Right cardiac atrium (tissue), 5 donors: ENCODE measurements at regions of chr21 and their contacts with region 1.

Region 1: GRCh38 chr21:42117229-42117966 is 46.3 kb downstream of the UMODL1 start:
- DNase-seq: peak; percentile 63 to 86 (median 80)
- ATAC-seq: peak; percentile 77 to 85
- H3K4me3 ChIP-seq: no peak overlapping the region
- H3K27ac ChIP-seq: no peak overlapping the region
- H3K4me1 ChIP-seq: no peaks in the 10 kb centered on the region
- H3K27me3 ChIP-seq: no peaks in the 10 kb centered on the region

Region 2: DNA sequence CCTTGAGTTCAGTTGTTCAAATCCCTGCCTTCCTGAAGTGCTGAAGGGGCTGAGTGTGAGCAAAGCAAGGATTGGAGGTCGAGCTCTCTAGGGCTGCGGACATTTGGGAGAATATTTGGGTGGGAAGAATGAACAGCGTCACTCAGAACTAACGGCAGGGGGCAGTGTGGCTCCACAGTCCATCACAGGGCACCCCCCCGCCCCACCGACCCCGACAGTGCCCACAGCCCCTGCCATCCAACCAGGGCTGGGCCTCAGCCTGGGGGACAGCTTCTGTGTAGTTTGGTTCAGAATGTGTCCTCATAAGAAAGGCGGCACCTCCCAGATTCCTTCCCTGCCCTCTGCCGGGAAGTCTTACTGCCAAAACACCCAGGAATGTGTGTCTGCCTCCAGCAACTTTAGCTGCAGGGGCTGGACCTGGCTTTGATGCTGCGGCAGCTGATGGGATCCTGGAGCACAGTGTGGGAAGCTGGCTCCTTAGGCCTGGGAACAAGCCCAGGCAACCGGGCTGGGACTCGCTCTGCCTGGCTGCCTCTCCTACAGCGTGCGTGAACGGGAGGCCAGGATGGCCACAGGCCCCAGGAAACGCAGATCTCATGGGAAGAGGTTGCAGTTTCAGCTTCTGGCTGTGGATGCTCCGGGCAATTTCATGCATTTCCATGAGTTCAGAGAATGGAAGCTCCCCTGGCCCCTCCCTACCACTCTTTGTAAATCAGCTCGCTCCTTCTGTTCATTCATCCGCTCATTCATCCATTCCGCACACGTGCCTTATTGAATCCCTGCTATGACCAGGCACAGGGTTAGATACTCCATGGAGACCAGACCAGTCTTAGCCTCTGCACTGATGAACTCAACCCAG is 504.5 kb before region 1 on chr21:
- intact Hi-C with region 1: loop called in 2 of 4 experiments (anchors 5 to 10 kb)
- DNase-seq: peak; percentile 89 to 93 (median 91)
- ATAC-seq: peak; percentile 90 to 96
- H3K4me3 ChIP-seq: no peak overlapping the region
- H3K27ac ChIP-seq: no peak overlapping the region
- H3K4me1 ChIP-seq: peaks cover 1% of the 10 kb centered on the region
- H3K27me3 ChIP-seq: no peaks in the 10 kb centered on the region

Region 3: DNA sequence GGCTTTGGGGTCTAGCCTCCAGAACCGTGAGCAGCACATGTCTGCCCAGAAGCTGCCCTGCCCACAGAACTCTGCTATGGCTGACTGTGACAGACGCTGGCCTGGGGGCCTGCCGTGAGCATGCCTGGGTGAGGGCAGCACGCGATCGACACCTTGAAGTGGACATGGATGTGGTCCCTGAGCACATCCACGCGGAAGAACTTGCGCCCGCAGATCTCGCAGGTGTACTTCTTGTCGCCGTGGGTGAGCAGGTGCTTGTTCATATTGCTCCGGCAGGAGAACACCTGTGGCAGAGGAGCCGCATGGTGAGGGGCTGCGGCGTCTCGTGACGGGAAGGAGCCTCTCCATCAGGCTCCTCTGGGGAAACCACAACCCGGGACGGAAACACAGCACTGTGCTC is 294.2 kb before region 1 on chr21:
- intact Hi-C with region 1: loop called in 2 of 4 experiments (anchors 5 kb)
- DNase-seq: peak in 1 of 3 donors; percentile 58
- ATAC-seq: no peak
- H3K4me3 ChIP-seq: no peak overlapping the region
- H3K27ac ChIP-seq: no peak overlapping the region
- H3K4me1 ChIP-seq: no peaks in the 10 kb centered on the region
- H3K27me3 ChIP-seq: no peaks in the 10 kb centered on the region

Region 4: DNA sequence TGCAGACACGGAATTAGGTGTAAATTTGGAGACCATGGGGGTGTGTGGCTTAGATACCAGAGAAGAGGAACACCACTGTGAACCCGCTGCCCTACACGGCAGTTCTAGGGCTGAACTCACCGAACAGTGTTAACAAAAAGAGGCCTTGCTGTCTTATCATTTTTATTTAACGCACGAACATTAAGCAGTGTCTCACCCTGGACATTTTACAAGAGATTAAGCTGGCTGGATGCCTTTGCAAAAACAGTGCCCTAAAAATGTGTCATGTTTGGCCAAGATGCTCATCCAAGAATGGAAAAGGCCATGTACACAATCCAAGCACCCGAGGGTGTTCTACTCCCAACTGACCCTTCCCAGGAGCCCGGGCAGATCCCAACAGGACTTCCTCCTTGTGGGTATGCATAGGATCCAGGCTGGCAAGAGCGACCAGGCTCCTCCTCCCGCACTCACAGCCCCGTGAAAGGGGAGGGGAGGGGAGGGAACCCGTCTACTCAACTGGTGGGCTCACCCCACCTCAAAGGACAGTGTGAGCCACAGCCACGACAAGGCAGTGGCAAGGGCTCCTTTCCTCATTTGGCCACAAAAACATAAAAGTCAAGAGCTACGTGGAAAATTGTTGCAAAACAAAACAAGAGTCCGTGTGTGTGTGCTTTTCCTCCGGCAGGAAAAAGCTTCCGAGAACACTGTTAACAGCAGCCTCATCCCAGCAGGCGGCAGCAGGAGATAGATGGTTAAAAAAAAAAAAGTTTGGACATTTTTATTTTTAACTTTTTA is 183.9 kb before region 1 on chr21:
- intact Hi-C with region 1: loop called in 1 of 4 experiments (anchors 5 kb)
- DNase-seq: peak; percentile 51 to 72 (median 72)
- ATAC-seq: peak; percentile 62 to 65
- H3K4me3 ChIP-seq: peak overlapping the region; percentile 56
- H3K27ac ChIP-seq: peak overlapping the region; percentile 81
- H3K4me1 ChIP-seq: peaks cover 2% of the 10 kb centered on the region
- H3K27me3 ChIP-seq: no peaks in the 10 kb centered on the region

Region 5: GRCh38 chr21:41966041-41966684 is 151.2 kb before region 1 on chr21:
- intact Hi-C with region 1: no loop called
- DNase-seq: no peak
- ATAC-seq: no peak
- H3K4me3 ChIP-seq: no peak overlapping the region
- H3K27ac ChIP-seq: no peak overlapping the region
- H3K4me1 ChIP-seq: no peaks in the 10 kb centered on the region
- H3K27me3 ChIP-seq: no peaks in the 10 kb centered on the region

Region 6: GRCh38 chr21:42009831-42010523 is 107.4 kb before region 1 on chr21 and contains the start of gene ZBTB21:
- intact Hi-C with region 1: loop called in 1 of 4 experiments (anchors 5 kb)
- DNase-seq: peak; percentile 99 to 100 (median 99)
- ATAC-seq: peak; percentile 98 to 99
- H3K4me3 ChIP-seq: peak within 1 kb of the TSS; percentile 53
- H3K27ac ChIP-seq: peak within 1 kb of the TSS; percentile 96
- H3K4me1 ChIP-seq: no peaks in the 10 kb centered on the region
- H3K27me3 ChIP-seq: no peaks in the 10 kb centered on the region
- total RNA-seq, gene ZBTB21: 6.8 to 15.2 (median 8.9) TPM

Region 7: DNA sequence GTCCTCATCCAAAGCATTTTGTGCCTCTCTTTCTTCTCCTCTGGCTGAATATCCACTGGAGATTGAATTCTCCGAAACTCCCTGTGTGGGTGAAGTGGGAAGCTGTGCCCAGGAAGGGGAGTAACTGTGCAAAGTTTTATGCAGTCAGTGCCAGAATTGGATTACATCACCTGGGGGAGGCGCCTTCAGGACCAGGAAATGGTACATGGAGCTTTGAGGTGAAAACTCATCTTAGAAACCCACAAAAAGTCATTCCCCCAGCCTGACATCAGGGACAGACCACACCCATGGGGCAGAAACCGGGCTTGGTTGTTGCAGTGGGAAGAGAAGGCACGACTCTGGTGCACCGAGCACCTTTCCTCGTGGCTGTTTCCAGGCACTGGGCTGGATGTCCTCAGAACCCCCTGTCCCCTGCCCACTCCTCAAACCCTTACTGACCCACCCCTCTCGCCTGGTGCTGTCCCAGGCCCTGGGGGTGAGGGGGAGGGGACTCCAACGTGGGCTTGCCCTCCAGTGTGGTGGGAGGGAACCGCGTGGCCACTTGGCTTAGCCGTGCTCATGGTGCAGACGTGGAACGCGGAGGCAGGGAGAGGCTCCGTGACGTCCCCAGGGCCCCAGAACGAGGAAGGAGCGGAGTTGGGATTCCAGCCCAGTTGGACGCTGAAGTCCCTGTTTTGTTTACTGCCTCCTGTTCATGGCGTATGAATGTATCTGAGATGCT is 182.1 kb after region 1 on chr21:
- intact Hi-C with region 1: no loop called
- DNase-seq: peak in 2 of 3 donors; percentile 69 to 79
- ATAC-seq: peak in 1 of 2 donors; percentile 54
- H3K4me3 ChIP-seq: no peak overlapping the region
- H3K27ac ChIP-seq: no peak overlapping the region
- H3K4me1 ChIP-seq: peaks cover 2% of the 10 kb centered on the region
- H3K27me3 ChIP-seq: no peaks in the 10 kb centered on the region